ENCODE measurements at regions of chr2 and their contacts with region 1.

Region 1: DNA sequence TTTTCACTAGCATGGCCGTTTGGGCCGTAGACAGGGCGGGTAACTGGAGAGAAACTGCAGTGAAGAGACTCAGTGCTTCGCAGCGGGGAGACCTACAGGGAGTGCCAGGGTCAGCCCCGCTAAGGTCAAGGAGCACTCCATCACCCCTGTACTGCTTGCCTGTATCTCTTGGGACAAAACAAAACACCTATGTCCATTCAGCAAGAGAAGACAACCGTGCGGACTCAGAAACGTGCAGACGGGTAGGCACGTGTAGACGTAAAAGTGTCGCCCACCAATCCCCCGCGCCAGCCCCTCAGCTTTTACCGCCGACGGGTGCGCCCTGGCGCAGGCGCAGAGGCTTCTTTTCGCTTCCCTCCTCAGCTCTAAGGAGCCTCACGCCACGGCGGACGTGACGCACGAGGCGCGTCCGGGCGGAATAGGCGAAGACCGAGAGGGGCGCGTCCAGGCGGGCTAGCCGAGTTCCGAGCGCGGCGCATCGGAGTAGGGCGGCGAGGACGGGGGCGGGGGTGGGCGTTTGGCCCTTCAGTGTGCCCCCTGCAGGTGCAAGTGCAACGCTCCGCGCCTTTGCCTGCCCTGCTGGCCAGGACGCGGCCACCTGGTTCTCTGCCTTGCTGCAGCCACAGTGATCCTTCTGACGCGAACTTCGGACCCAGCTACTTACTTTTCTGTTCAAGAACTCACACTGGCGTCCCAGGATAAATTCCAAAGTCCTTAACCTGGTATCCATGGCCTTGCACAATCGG is 3.3 kb upstream of the SOS1 start:
- DNase-seq: peak; percentile 98
- ATAC-seq: peak; percentile 68
- H3K4me3 Mint-ChIP-seq: peak overlapping the region; percentile 83
- H3K27ac Mint-ChIP-seq: peak overlapping the region; percentile 87
- H3K4me1 Mint-ChIP-seq: peaks cover 45% of the 10 kb centered on the region
- H3K27me3 Mint-ChIP-seq: no peaks in the 10 kb centered on the region

Region 2: GRCh38 chr2:38602732-38603401 is 521.3 kb before region 1 on chr2 and contains the start of gene HNRNPLL:
- CTCF ChIA-PET with region 1: no interaction called
- POLR2A ChIA-PET with region 1: no interaction called
- intact Hi-C with region 1: loop called in 1 of 2 experiments (anchors 5 kb)
- DNase-seq: peak; percentile 99
- ATAC-seq: peak; percentile 87
- H3K4me3 Mint-ChIP-seq: peak within 1 kb of the TSS; percentile 76
- H3K27ac Mint-ChIP-seq: peak within 1 kb of the TSS; percentile 94
- H3K4me1 Mint-ChIP-seq: peaks cover 48% of the 10 kb centered on the region
- H3K27me3 Mint-ChIP-seq: no peaks in the 10 kb centered on the region
- total RNA-seq, gene HNRNPLL: 53.5 to 59.8 TPM

Region 3: GRCh38 chr2:38740851-38741731 is 383.1 kb before region 1 on chr2:
- CTCF ChIA-PET with region 1: no interaction called
- POLR2A ChIA-PET with region 1: no interaction called
- intact Hi-C with region 1: loop called in 1 of 2 experiments (anchors 10 kb)
- DNase-seq: peak; percentile 39
- ATAC-seq: peak; percentile 5
- H3K4me3 Mint-ChIP-seq: no peak overlapping the region
- H3K27ac Mint-ChIP-seq: peak overlapping the region; percentile 47
- H3K4me1 Mint-ChIP-seq: peaks cover 55% of the 10 kb centered on the region
- H3K27me3 Mint-ChIP-seq: no peaks in the 10 kb centered on the region

Region 4: GRCh38 chr2:38875576-38876367 is 248.4 kb before region 1 on chr2 and contains the starts of genes DHX57 and MORN2:
- CTCF ChIA-PET with region 1: no interaction called
- POLR2A ChIA-PET with region 1: no interaction called
- intact Hi-C with region 1: loop called in 1 of 2 experiments (anchors 2 kb)
- DNase-seq: peak; percentile 91
- ATAC-seq: peak; percentile 99
- H3K4me3 Mint-ChIP-seq: peak within 1 kb of the TSS; percentile 98
- H3K27ac Mint-ChIP-seq: peak within 1 kb of the TSS; percentile 90
- H3K4me1 Mint-ChIP-seq: peaks cover 18% of the 10 kb centered on the region
- H3K27me3 Mint-ChIP-seq: no peaks in the 10 kb centered on the region
- total RNA-seq, gene DHX57: 14.0 to 20.3 TPM
- total RNA-seq, gene MORN2: 6.6 to 7.9 TPM

Region 5: DNA sequence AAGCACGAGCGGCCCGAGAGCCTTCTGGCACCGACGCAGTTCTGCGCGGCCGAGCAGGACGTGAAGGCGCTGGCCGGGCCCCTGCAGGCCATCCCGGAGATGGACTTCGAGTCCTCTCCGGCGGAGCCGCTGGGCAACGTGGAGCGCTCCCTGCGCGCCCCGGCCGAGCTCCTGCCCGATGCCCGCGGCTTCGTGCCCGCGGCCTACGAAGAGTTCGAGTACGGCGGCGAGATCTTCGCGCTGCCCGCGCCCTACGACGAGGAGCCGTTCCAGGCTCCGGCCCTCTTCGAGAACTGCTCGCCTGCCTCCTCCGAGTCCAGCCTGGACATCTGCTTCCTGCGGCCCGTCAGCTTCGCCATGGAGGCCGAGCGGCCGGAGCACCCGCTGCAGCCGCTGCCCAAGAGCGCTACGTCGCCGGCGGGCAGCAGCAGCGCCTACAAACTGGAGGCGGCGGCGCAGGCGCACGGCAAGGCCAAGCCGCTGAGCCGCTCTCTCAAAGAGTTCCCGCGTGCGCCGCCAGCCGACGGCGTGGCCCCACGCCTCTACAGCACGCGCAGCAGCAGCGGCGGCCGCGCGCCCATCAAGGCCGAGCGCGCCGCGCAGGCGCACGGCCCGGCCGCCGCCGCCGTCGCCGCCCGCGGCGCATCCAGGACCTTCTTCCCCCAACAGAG is 164.1 kb before region 1 on chr2:
- CTCF ChIA-PET with region 1: no interaction called
- POLR2A ChIA-PET with region 1: no interaction called
- intact Hi-C with region 1: no loop called
- DNase-seq: peak; percentile 87
- ATAC-seq: peak; percentile 100
- H3K4me3 Mint-ChIP-seq: peak overlapping the region; percentile 36
- H3K27ac Mint-ChIP-seq: no peak overlapping the region
- H3K4me1 Mint-ChIP-seq: peaks cover 2% of the 10 kb centered on the region
- H3K27me3 Mint-ChIP-seq: peaks cover 18% of the 10 kb centered on the region

Region 6: GRCh38 chr2:39017334-39017733 is 106.8 kb before region 1 on chr2:
- CTCF ChIA-PET with region 1: no interaction called
- POLR2A ChIA-PET with region 1: no interaction called
- intact Hi-C with region 1: no loop called
- DNase-seq: no peak
- ATAC-seq: no peak
- H3K4me3 Mint-ChIP-seq: no peak overlapping the region
- H3K27ac Mint-ChIP-seq: no peak overlapping the region
- H3K4me1 Mint-ChIP-seq: no peaks in the 10 kb centered on the region
- H3K27me3 Mint-ChIP-seq: no peaks in the 10 kb centered on the region

Region 7: DNA sequence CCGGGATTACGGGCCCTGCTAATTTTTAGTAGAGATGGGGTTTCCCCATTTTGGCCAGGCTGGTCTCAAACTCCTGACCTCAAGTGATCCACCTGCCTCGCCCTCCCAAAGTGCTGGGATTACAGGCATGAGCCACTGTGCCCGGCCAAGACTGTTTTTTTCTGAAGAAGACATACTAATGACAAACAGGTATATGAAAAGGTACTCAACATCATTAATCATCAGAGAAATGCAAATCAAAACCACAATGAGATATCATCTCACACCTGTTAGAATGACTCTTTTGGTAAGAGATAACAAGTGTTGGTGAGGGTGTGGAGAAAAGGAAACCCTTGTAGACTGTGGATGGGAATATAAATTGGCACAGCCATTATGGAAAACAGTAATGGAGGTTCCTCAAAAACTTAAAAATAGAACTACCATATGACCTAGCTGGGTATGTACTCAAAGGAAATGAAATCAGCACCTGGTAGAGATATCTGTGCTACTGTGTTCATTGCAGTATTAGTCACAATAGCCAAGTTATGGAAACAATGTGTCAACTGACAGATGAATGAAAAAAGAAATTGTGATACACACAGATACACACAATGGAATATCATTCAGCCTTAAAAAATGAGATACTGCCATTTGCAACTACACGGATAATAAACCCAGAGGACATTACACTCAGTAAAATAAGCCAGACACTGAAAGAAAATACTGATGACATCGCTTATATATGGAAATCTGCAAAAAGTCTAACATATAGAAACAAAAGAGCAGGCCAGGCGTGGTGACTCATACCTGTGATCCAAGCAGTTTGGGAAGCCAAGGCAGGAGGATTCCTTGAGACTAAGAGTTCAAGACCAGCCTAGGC is 24.1 kb before region 1 on chr2:
- CTCF ChIA-PET with region 1: interaction called, 5 read pairs
- POLR2A ChIA-PET with region 1: interaction called, 4 read pairs
- intact Hi-C with region 1: loop called (anchors 1 kb)
- DNase-seq: peak; percentile 33
- ATAC-seq: peak; percentile 92
- H3K4me3 Mint-ChIP-seq: no peak overlapping the region
- H3K27ac Mint-ChIP-seq: peak overlapping the region; percentile 87
- H3K4me1 Mint-ChIP-seq: peaks cover 56% of the 10 kb centered on the region
- H3K27me3 Mint-ChIP-seq: no peaks in the 10 kb centered on the region

Region 8: GRCh38 chr2:39179974-39180970 is 56.1 kb after region 1 on chr2:
- CTCF ChIA-PET with region 1: no interaction called
- POLR2A ChIA-PET with region 1: no interaction called
- intact Hi-C with region 1: no loop called
- DNase-seq: no peak
- ATAC-seq: no peak
- H3K4me3 Mint-ChIP-seq: no peak overlapping the region
- H3K27ac Mint-ChIP-seq: no peak overlapping the region
- H3K4me1 Mint-ChIP-seq: no peaks in the 10 kb centered on the region
- H3K27me3 Mint-ChIP-seq: no peaks in the 10 kb centered on the region

Region 9: DNA sequence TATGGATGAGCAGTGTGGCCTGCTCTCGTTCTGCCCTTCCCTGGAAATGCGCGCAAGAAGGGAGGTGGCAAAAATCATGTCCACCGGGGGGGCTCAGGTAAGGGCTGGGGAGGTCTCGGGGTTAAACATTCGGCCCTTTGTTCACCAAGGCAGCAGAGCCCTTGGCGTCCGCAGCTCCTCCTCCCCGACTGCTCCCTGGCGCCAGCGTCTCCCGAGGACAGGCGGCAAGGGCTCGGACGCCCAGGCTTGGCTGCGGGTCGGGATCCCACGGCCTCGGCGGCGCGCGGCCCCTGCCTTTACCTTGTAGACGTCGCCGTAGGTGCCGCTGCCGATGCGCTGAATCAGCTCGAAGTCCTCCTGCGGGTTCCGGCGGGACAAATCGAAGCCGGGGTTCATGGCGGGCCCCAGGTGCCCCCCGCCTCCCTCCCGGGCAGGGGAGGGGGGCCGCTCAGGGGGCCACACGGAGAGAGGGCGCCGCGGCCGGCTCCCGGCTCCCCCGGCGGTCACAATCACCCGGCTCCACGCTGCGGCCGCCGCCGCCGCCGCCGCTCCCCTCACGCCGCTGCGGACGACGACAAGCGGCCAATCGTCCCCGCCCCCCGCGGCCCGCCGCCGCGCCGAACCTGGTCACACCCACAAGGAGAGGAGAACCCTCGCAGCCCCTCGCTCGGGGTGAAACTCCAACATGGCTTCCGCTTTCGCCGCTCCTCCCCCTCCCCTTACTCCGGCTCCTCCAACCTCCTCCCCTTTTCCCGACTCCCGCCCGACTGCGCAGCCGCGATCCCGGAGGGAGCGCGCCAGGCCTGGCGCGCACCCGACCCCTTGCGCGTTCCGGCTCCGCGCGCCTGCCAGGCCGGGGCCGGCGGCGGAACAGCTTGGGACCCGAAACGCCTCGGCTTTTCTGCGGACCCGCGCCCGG is 312.7 kb after region 1 on chr2 and contains the start of gene MAP4K3:
- CTCF ChIA-PET with region 1: no interaction called
- POLR2A ChIA-PET with region 1: no interaction called
- intact Hi-C with region 1: loop called in 1 of 2 experiments (anchors 2 kb)
- DNase-seq: peak; percentile 88
- ATAC-seq: peak; percentile 70
- H3K4me3 Mint-ChIP-seq: peak within 1 kb of the TSS; percentile 86
- H3K27ac Mint-ChIP-seq: peak within 1 kb of the TSS; percentile 80
- H3K4me1 Mint-ChIP-seq: peaks cover 65% of the 10 kb centered on the region
- H3K27me3 Mint-ChIP-seq: no peaks in the 10 kb centered on the region
- total RNA-seq, gene MAP4K3: 8.1 to 11.8 TPM

Region 10: GRCh38 chr2:39778962-39779851 is 655.0 kb after region 1 on chr2 and contains the start of gene THUMPD2:
- CTCF ChIA-PET with region 1: no interaction called
- POLR2A ChIA-PET with region 1: no interaction called
- intact Hi-C with region 1: loop called in 1 of 2 experiments (anchors 5 kb)
- DNase-seq: peak; percentile 84
- ATAC-seq: peak; percentile 77
- H3K4me3 Mint-ChIP-seq: peak within 1 kb of the TSS; percentile 87
- H3K27ac Mint-ChIP-seq: peak within 1 kb of the TSS; percentile 88
- H3K4me1 Mint-ChIP-seq: peaks cover 64% of the 10 kb centered on the region
- H3K27me3 Mint-ChIP-seq: no peaks in the 10 kb centered on the region
- total RNA-seq, gene THUMPD2: 15.2 to 18.4 TPM